ENCODE measurements at regions of chr20 and their contacts with region 1.

Region 1: DNA sequence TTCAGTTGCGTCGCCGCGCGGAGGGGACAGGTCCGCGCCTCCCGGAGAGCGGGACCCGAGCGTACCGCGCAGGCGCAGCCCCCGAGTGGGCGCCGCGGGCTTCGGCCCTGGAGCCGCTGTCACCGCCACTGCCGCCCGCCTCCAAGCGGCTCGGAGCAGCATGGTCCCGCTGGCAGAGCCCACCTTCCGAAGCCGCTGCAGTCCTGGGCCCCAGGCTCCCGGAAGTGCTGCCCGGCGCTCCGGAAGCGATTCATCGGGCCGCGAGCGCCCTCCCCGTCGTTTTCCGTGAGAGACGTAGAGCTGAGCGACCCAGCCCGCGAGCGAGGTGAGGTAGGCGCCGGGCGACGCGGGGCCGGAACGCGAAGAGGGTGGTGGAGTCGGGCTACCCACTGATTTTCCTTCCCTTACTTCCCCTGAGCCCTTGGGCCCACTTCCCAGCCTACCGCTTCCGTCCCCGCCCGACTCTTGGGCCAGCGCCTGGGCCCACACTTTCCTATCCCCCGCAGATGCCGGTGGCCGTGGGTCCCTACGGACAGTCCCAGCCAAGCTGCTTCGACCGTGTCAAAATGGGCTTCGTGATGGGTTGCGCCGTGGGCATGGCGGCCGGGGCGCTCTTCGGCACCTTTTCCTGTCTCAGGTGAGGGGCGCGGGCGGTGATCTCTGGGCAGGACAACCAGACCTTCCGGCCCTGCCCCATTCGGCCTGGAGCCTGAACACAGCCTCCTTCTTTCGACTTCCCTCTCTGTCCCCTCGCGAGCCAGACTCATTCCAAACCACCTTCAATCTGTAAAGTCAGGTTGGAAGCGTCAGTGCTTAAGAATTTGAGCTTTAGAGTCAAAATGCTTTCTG is at the starts of genes NFS1 and ROMO1:
- DNase-seq: peak; percentile 96
- H3K4me3 ChIP-seq: peak within 1 kb of the TSS; percentile 88 to 100 (median 92)
- H3K27ac ChIP-seq: peak within 1 kb of the TSS; percentile 91 to 95 (median 94)
- H3K4me1 ChIP-seq: peaks cover 19 to 43% (median 29%) of the 10 kb centered on the region in 4 donors
- H3K27me3 ChIP-seq: no peaks in the 10 kb centered on the region
- CTCF ChIP-seq: peak; percentile 14 to 42 (median 36)
- EP300 ChIP-seq: no peak
- POLR2A ChIP-seq: peak; percentile 29
- total RNA-seq, gene NFS1: 25.3 to 63.3 (median 32.7) TPM
- total RNA-seq, gene ROMO1: 159 to 360 (median 263) TPM

Region 2: DNA sequence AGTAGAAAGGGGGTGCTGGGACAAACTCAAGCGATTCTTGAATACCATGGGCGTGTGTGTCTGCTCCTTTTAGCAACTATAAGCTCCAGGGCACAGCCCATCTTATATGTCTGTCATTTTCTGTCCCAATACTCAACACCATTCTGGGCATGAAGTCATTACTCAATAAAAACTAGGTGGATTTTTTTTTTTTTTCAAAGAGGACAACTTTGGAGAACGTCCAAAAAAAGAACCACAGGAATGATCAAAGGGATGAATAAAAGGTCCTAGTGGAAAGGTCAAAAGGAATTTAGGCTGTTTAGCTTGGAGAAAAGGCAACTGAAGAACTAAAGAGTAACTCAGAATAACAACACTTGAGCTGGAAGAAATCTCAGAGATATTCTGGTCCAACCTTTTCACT is 312.0 kb before region 1 on chr20:
- intact Hi-C with region 1: no loop called
- DNase-seq: no peak
- H3K4me3 ChIP-seq: no peak overlapping the region
- H3K27ac ChIP-seq: no peak overlapping the region
- H3K4me1 ChIP-seq: no peaks in the 10 kb centered on the region
- H3K27me3 ChIP-seq: no peaks in the 10 kb centered on the region
- CTCF ChIP-seq: no peak
- EP300 ChIP-seq: no peak
- POLR2A ChIP-seq: no peak

Region 3: DNA sequence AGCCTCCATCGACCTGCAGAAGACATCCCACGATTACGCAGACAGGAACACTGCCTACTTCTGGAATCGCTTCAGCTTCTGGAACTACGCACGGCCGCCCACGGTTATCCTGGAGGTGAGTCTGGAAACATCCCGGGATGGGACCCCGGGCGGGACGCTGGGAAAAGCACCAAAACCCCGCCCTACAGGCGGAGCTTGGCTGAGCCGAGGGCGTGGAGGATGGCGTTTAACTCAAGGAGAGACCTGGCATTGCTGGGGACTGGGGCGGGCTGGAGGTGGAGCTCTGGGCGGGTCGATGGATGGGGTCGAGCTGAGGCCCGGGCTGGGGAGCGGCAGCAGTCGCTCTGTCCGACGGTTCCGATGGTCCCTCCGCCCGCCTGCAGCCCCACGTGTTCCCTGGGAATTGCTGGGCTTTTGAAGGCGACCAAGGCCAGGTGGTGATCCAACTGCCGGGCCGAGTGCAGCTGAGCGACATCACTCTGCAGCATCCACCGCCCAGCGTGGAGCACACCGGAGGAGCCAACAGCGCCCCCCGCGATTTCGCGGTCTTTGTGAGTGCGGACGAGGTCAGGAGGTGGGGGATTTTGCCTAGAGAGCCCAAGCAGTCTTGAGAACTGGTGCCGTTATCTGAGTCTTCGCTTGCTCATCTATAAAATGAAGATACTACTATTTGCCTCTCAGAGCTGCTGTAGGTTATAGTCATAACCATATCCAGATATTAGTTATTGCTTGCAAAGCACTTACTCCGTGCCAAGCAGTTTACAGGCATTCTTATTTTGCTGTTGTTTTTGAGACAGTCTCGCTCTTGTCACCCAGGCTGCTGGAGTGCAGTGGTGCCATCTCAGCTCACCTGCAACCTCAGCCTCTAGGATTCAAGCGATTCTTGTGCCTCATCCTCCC is 79.9 kb before region 1 on chr20:
- intact Hi-C with region 1: no loop called
- DNase-seq: peak; percentile 96
- H3K4me3 ChIP-seq: peak overlapping the region; percentile 60 to 68 (median 62)
- H3K27ac ChIP-seq: peak overlapping the region; percentile 44 to 98 (median 92)
- H3K4me1 ChIP-seq: peaks cover 28 to 45% (median 42%) of the 10 kb centered on the region in 4 donors
- H3K27me3 ChIP-seq: no peaks in the 10 kb centered on the region
- CTCF ChIP-seq: peak in 1 of 3 experiments; percentile 11
- EP300 ChIP-seq: no peak
- POLR2A ChIP-seq: no peak

Region 4: DNA sequence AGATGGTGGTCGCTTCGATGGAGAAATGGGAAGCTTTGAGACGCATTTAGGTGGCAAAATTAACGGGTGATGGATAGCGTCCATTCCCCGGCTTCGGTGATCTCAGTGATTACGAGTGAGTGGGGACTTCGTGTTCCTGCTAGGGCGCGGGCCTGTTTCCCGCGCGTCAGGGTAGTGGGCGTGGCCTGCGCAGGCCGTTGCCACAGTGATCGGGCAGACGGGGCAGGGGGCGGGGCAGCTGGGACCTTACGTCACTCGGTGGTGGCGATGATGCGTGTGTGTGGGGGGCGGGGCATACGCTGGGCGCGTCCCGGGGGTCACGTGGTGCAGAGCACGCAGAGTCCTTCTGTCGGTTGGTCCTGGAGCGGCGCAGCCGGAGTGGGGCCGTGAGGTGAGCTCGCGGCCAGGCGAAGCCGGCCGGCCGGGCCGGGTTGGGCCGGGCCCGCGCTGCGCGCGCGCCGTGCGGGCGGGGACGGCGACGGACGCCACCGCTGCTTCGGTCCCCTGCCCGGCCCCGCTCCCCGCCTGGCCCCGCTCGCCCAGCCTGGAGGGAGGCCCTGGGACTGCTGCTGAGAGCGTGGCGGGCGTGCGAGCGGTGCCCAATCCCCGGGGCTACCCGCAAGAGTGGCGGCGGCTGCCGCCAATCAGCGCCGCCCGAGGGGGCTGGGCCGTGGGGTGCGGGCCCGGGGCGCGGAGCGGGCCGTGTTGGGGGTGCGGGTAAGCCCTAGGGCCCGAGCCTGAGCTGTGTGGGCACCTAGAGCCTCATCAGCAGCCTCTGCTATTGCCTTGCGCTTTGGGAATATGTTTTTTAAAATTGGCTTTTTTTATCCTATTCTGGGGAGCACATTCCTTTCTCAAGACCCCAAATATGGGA is 72.6 kb after region 1 on chr20 and contains the start of gene PHF20:
- intact Hi-C with region 1: loop called (anchors 2 kb)
- DNase-seq: peak; percentile 100
- H3K4me3 ChIP-seq: peak within 1 kb of the TSS; percentile 64 to 82 (median 69)
- H3K27ac ChIP-seq: peak within 1 kb of the TSS; percentile 84 to 95 (median 92)
- H3K4me1 ChIP-seq: peaks cover 63 to 86% (median 76%) of the 10 kb centered on the region in 4 donors
- H3K27me3 ChIP-seq: no peaks in the 10 kb centered on the region
- CTCF ChIP-seq: peak in 2 of 3 experiments; percentile 17 to 23
- EP300 ChIP-seq: peak; percentile 95
- POLR2A ChIP-seq: peak; percentile 3
- total RNA-seq, gene PHF20: 45.9 to 62.2 (median 48.0) TPM

Region 5: DNA sequence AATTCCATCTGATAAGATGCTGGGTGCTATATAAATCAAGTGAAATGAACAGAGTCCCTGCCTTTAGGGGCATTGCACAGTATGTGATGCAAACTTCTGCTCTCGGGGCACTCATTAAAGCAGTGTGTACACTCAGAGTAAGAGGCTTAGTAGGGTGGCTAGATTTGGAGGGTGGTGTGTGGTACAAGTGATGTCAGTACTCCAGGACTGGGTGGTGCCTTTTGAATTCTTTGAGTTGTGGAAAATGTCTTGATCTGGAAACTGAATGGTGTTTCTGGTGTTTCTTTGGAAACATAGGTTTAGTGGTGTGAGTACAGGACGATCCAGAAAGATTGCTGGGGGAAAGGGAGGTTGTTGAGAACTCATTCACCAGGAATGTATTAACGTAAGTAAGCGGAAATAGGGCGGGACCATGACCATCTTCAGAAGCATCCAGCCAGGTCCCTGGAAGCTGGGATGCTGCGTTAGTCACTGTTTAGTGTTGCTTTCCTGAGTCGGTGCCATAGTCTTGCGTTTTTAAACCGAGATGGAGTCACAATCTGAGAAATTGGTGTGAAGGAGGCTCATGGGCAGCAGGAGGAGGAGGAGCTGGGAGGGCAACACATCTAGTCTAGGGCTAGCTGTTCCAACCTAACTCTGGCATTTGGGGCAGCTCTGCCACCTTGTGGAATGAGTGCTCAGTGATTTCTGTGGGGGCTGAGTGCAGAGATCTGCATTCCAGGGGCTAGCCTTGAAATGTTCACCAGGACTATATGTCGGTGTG is 184.6 kb after region 1 on chr20:
- intact Hi-C with region 1: loop called (anchors 10 kb)
- DNase-seq: no peak
- H3K4me3 ChIP-seq: peak overlapping the region in 3 of 4 donors; percentile 29 to 42 (median 32)
- H3K27ac ChIP-seq: peak overlapping the region; percentile 73 to 87 (median 78)
- H3K4me1 ChIP-seq: peaks cover 5 to 27% (median 24%) of the 10 kb centered on the region in 4 donors
- H3K27me3 ChIP-seq: no peaks in the 10 kb centered on the region
- CTCF ChIP-seq: peak; percentile 76 to 82 (median 79)
- EP300 ChIP-seq: no peak
- POLR2A ChIP-seq: no peak

Measured in esophagus muscularis mucosa (tissue), 4 donors.